Mammary epithelial cell (primary cell): ENCODE measurements at regions of chr4 and their contacts with region 1.

Region 1: GRCh38 chr4:139547979-139548378 is 8.0 kb downstream of the SETD7 start:
- DNase-seq: no peak
- H3K4me3 ChIP-seq: no peak overlapping the region
- H3K27ac ChIP-seq: no peak overlapping the region
- H3K4me1 ChIP-seq: peaks cover 5% of the 10 kb centered on the region
- H3K27me3 ChIP-seq: no peaks in the 10 kb centered on the region
- CTCF ChIP-seq: no peak

Region 2: GRCh38 chr4:139509727-139510410 is 38.1 kb before region 1 on chr4:
- CTCF ChIA-PET with region 1: no interaction called
- dilution Hi-C with region 1: loop called (anchors 5 kb)
- in situ Hi-C with region 1: no loop called
- intact Hi-C with region 1: no loop called
- DNase-seq: no peak
- H3K4me3 ChIP-seq: no peak overlapping the region
- H3K27ac ChIP-seq: no peak overlapping the region
- H3K4me1 ChIP-seq: no peaks in the 10 kb centered on the region
- H3K27me3 ChIP-seq: no peaks in the 10 kb centered on the region
- CTCF ChIP-seq: peak; percentile 7 to 57

Region 3: GRCh38 chr4:139582044-139582443 is 34.1 kb after region 1 on chr4:
- CTCF ChIA-PET with region 1: no interaction called
- dilution Hi-C with region 1: loop called (anchors 5 kb)
- in situ Hi-C with region 1: no loop called
- intact Hi-C with region 1: no loop called
- DNase-seq: no peak
- H3K4me3 ChIP-seq: no peak overlapping the region
- H3K27ac ChIP-seq: no peak overlapping the region
- H3K4me1 ChIP-seq: no peaks in the 10 kb centered on the region
- H3K27me3 ChIP-seq: peaks cover 3% of the 10 kb centered on the region
- CTCF ChIP-seq: no peak

Region 4: GRCh38 chr4:139783741-139784484 is 235.9 kb after region 1 on chr4:
- CTCF ChIA-PET with region 1: no interaction called
- dilution Hi-C with region 1: no loop called
- in situ Hi-C with region 1: no loop called
- intact Hi-C with region 1: no loop called
- DNase-seq: peak; percentile 57
- H3K4me3 ChIP-seq: no peak overlapping the region
- H3K27ac ChIP-seq: no peak overlapping the region
- H3K4me1 ChIP-seq: peaks cover 9% of the 10 kb centered on the region
- H3K27me3 ChIP-seq: no peaks in the 10 kb centered on the region
- CTCF ChIP-seq: no peak